ENCODE measurements at regions of chr10 and their contacts with region 1.

Region 1: GRCh38 chr10:75401569-75402485 is at the start of gene ZNF503:
- DNase-seq: peak in 1 of 2 donors; percentile 99
- H3K4me3 ChIP-seq: peak within 1 kb of the TSS; percentile 88 to 99
- H3K27ac ChIP-seq: peak within 1 kb of the TSS; percentile 99
- H3K4me1 ChIP-seq: peaks cover 40% of the 10 kb centered on the region
- H3K27me3 ChIP-seq: no peaks in the 10 kb centered on the region
- CTCF ChIP-seq: peak in 1 of 3 experiments; percentile 51
- POLR2A ChIP-seq: peak; percentile 40 to 95
- total RNA-seq, gene ZNF503: 24.6 TPM

Region 2: DNA sequence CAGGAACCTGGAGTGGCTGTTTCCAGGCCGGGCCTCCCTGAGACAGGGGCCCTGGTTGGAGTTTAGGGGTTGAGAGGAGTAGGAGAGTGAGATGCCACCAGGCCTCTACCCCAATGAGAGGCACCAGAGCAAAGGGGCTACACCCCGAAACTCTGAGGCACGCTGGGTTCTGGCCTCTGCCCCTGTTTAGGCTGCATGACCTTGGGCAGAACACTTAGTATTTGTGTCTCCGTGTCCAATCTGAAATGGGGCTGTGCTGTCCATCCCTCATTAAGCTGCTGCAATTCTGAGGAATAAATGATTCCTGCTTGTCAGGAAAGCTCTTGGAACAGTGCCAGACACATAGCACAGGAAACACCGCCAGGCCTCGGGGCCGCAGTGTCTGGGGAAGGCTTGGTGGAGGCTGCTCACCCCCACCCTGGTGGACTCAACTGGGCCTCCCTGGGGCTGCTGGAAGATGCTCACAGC is 330.8 kb before region 1 on chr10:
- intact Hi-C with region 1: no loop called
- DNase-seq: no peak
- H3K4me3 ChIP-seq: no peak overlapping the region
- H3K27ac ChIP-seq: no peak overlapping the region
- H3K4me1 ChIP-seq: peaks cover 17% of the 10 kb centered on the region
- H3K27me3 ChIP-seq: no peaks in the 10 kb centered on the region
- CTCF ChIP-seq: no peak
- POLR2A ChIP-seq: no peak

Region 3: DNA sequence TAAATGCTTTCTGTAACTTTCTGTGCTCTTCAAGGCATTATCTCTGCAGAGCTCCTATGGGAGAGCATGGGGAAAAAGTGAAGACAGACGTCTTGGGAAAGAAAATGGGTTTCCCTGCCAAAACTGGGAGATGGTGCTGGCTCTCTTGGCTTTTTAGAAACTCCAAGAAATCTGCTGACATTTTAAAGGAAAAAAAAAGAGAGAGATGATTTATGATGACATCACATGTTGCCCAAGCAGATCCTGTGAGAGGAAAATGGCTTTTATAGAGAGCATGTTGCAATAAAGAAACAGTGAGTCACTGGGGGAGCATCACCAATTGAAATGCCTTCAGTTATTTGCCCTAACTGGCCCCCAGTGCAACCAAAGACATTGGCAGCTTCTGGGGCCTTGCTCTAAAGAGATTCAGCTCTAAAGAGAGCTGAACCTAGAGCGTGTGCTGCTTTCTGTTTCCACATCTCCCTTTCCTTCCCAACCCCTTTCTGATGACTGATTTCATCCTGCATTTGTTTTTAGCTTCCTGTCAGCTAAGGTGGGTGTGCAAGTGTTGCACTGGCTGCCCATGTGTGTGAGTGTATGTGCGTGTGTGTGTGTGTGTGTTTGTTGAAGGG is 67.3 kb after region 1 on chr10:
- intact Hi-C with region 1: loop called (anchors 5 kb)
- DNase-seq: peak in 1 of 2 donors; percentile 96
- H3K4me3 ChIP-seq: no peak overlapping the region
- H3K27ac ChIP-seq: peak overlapping the region; percentile 73
- H3K4me1 ChIP-seq: peaks cover 44% of the 10 kb centered on the region
- H3K27me3 ChIP-seq: no peaks in the 10 kb centered on the region
- CTCF ChIP-seq: no peak
- POLR2A ChIP-seq: no peak

Region 4: GRCh38 chr10:75772153-75772887 is 370.5 kb after region 1 on chr10:
- intact Hi-C with region 1: loop called (anchors 10 kb)
- DNase-seq: no peak
- H3K4me3 ChIP-seq: peak overlapping the region; percentile 20 to 28
- H3K27ac ChIP-seq: peak overlapping the region; percentile 62
- H3K4me1 ChIP-seq: peaks cover 35% of the 10 kb centered on the region
- H3K27me3 ChIP-seq: no peaks in the 10 kb centered on the region
- CTCF ChIP-seq: no peak
- POLR2A ChIP-seq: no peak

Region 5: DNA sequence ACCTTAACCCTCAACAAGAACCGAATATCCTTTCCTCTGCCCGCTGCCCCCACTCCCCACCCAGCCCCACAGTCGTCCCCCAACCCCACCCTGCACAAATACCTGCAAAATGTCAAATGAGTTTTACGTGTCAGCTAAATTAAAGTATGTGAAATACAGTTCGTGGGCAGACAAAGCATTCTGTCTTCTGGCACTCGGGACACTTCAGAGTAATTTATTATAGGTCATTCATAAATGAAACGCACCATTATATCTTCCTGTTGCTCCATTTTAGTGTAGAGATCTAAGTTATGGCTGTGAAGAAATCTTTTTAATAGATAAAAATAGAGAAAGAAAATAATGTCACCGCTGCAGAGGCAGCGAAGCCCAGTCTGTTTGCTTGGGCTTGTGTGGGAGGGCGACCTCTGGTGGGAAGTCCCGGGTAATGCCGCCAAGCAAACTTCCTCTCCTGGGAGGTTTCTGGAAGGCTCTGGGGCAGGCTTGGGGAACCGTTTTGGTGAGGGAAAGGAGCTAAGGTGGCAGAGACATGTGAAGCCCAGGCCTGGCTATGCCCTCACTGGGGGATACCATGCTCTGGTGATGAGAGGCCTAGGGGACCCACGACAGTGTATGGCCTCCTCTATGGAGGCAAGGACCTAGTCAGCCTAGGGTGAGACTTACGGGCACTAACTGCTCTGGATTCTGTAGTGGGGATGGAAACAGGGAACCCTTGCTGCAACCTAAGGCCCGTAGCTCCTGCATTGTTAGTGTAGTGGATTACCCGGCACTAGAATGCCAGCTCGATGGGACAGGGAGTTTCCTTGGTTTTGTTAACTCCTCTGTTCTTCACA is 634.5 kb after region 1 on chr10:
- intact Hi-C with region 1: loop called (anchors 5 kb)
- DNase-seq: no peak
- H3K4me3 ChIP-seq: no peak overlapping the region
- H3K27ac ChIP-seq: peak overlapping the region; percentile 53
- H3K4me1 ChIP-seq: peaks cover 17% of the 10 kb centered on the region
- H3K27me3 ChIP-seq: no peaks in the 10 kb centered on the region
- CTCF ChIP-seq: peak; percentile 72 to 93 (median 88)
- POLR2A ChIP-seq: no peak

Region 6: DNA sequence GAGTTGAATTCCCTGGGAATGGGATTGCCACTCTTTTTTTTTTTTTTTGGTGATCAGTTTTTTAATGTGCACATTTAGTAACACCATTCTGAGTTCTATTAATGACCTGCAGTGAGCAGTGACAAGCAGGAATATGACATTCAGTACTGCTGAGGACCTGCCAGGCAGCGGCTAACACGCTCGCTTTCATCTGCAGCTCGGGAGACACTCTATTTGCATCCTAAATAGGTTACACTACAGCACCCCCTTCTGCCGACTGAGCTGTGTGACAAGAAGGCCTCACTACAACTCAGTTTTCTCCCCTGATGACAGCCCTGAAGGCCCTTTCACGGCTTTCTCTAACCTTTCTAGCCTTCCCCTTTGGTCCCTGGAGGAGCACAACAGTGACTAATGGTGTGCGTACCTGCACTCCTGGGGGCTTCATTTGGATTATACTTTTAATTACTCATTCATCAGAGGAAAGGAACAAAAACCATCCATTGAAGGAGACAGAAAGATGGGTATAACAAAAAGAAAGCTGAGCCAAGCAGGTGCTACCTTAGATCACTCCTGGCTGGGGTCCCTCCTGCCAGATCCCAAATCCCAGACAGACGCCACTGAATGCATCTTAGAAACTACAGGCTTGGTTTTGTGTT is 902.0 kb after region 1 on chr10:
- intact Hi-C with region 1: loop called (anchors 10 kb)
- DNase-seq: no peak
- H3K4me3 ChIP-seq: no peak overlapping the region
- H3K27ac ChIP-seq: no peak overlapping the region
- H3K4me1 ChIP-seq: no peaks in the 10 kb centered on the region
- H3K27me3 ChIP-seq: no peaks in the 10 kb centered on the region
- CTCF ChIP-seq: peak in 1 of 3 experiments; percentile 35
- POLR2A ChIP-seq: no peak

Region 7: DNA sequence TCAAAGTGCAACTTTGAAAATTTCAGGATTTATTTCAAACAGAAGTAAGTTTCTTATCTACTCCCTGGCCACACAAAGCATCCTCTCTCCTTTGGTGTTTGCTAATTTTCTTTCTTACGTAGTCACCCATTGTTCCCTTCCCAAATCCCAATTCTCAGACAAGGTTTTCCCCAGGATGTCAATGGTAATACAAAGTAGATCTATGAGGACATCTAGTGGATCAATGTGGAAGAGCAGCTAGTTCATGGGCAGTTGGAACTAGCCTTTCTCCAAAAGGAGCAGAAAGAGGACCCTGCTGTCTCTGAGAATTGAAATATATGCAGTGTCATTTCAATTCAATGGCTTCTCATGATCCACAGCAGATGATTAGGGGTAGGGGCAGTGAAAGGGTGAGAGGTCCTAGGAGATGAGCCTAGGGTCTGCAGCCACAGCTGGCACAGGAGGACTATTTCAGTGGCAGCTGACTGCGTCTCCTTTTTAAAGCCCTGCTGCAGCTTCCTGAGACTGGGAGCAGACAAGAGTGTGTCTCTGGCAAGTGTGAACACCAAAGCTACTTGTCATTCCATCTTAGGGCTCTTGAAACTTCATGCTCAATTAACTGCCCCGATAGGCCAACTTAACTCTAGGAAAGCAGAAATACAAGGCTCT is 1603.2 kb after region 1 on chr10:
- intact Hi-C with region 1: loop called (anchors 10 kb)
- DNase-seq: no peak
- H3K4me3 ChIP-seq: no peak overlapping the region
- H3K27ac ChIP-seq: no peak overlapping the region
- H3K4me1 ChIP-seq: no peaks in the 10 kb centered on the region
- H3K27me3 ChIP-seq: no peaks in the 10 kb centered on the region
- CTCF ChIP-seq: peak; percentile 67 to 86 (median 77)
- POLR2A ChIP-seq: no peak

Measured in vagina (tissue), 2 donors.